H1 (cell line): ENCODE measurements at regions of chr22 and their contacts with region 1.

Region 1: DNA sequence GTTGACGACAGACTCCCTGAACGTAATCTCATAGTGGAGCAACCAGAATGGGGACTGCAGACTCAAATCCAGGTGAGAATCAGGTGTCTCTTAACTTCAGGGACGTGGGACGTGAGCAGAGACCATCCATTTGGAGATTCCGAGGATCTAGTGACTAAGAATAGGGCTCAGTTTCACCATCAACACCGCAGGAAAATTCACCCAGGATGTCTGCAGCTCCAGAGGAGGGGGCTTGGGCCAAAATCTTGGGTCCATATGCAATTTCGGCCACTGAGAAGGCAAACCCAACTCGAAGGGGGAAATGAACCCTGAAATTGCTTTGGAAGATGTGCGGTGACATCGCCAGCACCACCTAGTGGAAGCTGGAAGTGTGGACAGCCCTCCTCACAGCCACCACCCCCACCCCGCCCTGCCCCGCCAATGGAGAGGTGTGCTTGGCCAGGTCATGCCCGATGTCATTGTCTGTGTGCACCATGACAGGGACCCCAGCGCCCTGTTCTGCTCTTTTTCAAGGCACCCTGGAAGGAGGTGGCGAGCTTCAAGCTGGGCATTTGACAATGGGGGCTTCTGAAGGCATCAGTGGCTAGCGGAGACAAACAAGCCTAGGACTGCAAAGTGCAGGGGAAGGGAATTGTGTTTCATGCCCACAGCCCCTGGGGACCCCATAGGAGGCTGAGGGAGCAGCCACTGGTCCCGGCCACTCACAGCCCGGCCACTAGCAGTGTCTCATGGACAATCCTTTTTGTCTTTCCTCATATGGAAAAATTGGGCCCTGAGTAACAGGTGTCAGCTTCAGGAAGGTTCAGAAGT is 24.8 kb downstream of the APOL1 start:
- DNase-seq: peak; percentile 56 to 77
- H3K4me3 ChIP-seq: peak overlapping the region in 1 of 4 experiments; percentile 39; a peak in 4 of 8 replicates
- H3K27ac ChIP-seq: no peak overlapping the region
- H3K4me1 ChIP-seq: no peaks in the 10 kb centered on the region; a peak in 3 of 7 replicates
- H3K27me3 ChIP-seq: no peaks in the 10 kb centered on the region
- CTCF ChIP-seq: peak; percentile 71 to 94 (median 86)
- EP300 ChIP-seq: no peak
- POLR2A ChIP-seq: 0 out of 3 replicates have a peak, but pooled peaks of 1 of the 2 experiments have one; percentile 17
- RAD21 ChIP-seq: peak; percentile 66 to 68

Region 2: GRCh38 chr22:36194971-36195370 is 82.7 kb before region 1 on chr22:
- CTCF ChIA-PET with region 1: interaction called, 13 read pairs
- POLR2A ChIA-PET with region 1: no interaction called
- DNase-seq: peak; percentile 36 to 66
- H3K4me3 ChIP-seq: no peak overlapping the region
- H3K27ac ChIP-seq: no peak overlapping the region
- H3K4me1 ChIP-seq: peaks cover 0 to 11% (median 9%) of the 10 kb centered on the region in 4 experiments; a peak in 6 of 7 replicates
- H3K27me3 ChIP-seq: no peaks in the 10 kb centered on the region
- CTCF ChIP-seq: peak; percentile 36 to 82 (median 81)
- EP300 ChIP-seq: no peak
- POLR2A ChIP-seq: no peak
- RAD21 ChIP-seq: peak; percentile 78 to 83

Region 3: GRCh38 chr22:36258701-36259614 is 18.7 kb before region 1 on chr22:
- CTCF ChIA-PET with region 1: interaction called, 15 read pairs
- POLR2A ChIA-PET with region 1: no interaction called
- DNase-seq: peak in 1 of 2 experiments; percentile 56
- H3K4me3 ChIP-seq: peak overlapping the region in 1 of 4 experiments; percentile 31; a peak in 1 of 8 replicates
- H3K27ac ChIP-seq: peak overlapping the region; percentile 47; the same call in 1 of the 2 replicates
- H3K4me1 ChIP-seq: peaks cover 7 to 14% (median 10%) of the 10 kb centered on the region in 4 experiments
- H3K27me3 ChIP-seq: no peaks in the 10 kb centered on the region
- CTCF ChIP-seq: no peak
- EP300 ChIP-seq: no peak
- POLR2A ChIP-seq: peak in 1 of 2 experiments; percentile 27; a peak in 1 of 3 replicates
- RAD21 ChIP-seq: no peak

Region 4: DNA sequence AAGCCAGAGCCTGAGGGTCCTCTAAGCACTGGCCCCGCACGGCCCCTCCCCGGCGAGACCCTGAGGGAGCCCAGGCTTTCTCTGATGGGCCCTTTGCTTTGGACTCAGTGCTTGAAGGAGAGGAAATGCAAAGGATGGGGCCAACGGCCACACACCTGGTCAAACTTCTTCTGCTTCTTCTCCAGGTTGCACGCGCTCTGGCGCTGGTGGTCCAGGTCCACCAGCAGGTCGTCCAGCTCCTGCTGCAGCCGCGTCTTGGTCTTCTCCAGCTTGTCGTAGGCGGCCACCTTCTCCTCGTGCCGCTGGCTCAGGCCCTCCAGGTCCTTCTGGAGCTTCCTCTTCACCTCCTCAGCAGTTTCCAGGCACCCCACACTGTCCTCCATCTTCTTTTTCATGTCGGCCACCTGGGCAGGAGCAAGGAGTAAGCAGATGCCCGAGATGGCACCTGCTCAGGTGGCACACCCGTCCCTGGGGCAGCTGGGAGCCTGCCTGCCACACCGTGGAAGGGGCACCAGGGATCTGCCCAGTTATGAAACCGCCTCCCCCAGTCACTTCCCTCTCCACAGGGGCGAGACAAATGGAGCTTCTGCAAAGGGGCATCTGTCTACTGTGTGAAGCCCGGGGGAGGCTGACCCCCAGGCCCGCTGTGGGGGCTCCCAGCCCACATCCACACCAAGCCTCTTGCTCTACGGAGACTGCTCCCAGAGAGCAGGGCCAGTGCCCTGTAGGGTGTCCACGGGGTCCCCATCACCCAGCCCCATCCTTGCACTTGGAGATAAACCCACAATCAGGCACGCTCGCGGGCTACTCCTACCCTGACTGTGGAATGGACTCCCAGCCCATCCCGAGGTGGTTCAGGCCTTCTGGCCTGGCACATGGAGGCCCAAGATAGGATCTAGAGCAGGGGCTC is 14.4 kb after region 1 on chr22:
- CTCF ChIA-PET with region 1: interaction called, 159 read pairs
- POLR2A ChIA-PET with region 1: interaction called, 5 read pairs
- DNase-seq: no peak
- H3K4me3 ChIP-seq: no peak overlapping the region
- H3K27ac ChIP-seq: no peak overlapping the region
- H3K4me1 ChIP-seq: no peaks in the 10 kb centered on the region
- H3K27me3 ChIP-seq: no peaks in the 10 kb centered on the region
- CTCF ChIP-seq: no peak
- EP300 ChIP-seq: no peak
- POLR2A ChIP-seq: no peak
- RAD21 ChIP-seq: no peak

Region 5: DNA sequence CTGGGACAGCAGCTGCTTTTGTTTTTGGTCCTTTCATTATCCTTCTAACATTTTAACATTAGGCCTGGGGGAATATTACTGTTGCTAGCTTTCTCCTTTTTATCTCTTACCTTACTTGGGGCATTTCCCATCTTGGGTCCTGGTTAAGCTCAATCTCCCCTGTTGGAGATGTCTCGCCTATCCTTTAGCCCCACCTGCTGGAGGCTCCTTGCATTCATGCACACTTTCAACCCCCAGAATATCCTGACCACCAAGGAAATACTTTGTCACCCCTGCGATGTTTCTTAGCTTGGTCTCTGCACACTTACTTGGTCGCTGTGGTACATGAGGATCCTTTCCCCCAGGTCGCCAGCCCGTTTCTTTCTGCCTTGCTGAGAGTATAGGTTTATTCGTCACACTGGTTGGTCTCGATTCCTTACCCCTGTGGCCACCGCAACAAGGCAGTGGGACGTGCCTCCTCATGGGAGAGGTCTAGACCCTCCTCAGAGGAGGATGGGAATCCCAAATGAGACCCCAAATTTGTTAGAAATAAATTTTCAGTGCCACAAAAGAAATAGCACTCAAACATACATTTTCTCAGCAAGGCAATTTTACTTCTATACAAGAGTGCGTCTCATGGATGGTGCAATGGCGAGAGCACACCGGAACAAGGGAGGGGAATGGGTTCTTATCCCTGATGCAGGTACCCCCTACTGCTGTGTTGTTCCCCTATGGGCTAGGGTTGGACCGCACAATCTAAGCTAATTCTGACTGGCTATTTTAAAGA is 209.1 kb after region 1 on chr22:
- CTCF ChIA-PET with region 1: interaction called, 11 read pairs
- POLR2A ChIA-PET with region 1: interaction called, 7 read pairs
- DNase-seq: peak in 1 of 2 experiments; percentile 85
- H3K4me3 ChIP-seq: no peak overlapping the region
- H3K27ac ChIP-seq: no peak overlapping the region
- H3K4me1 ChIP-seq: no peaks in the 10 kb centered on the region; a peak in 1 of 7 replicates
- H3K27me3 ChIP-seq: peaks cover 0 to 7% (median 5%) of the 10 kb centered on the region in 4 experiments; a peak in 5 of 7 replicates
- CTCF ChIP-seq: peak; percentile 70 to 86 (median 83)
- EP300 ChIP-seq: no peak
- POLR2A ChIP-seq: no peak
- RAD21 ChIP-seq: peak; percentile 83 to 91